ENCODE measurements at regions of chr1 and their contacts with region 1.

Region 1: GRCh38 chr1:168428063-168428731 is 115.6 kb downstream of the XCL2 start:
- DNase-seq: peak; percentile 30
- ATAC-seq: peak; percentile 80
- H3K4me3 Mint-ChIP-seq: peak overlapping the region; percentile 25; the same call in 1 of the 2 replicates
- H3K27ac Mint-ChIP-seq: no peak overlapping the region
- H3K4me1 Mint-ChIP-seq: peaks cover 3% of the 10 kb centered on the region; the same call in 1 of the 2 replicates
- H3K27me3 Mint-ChIP-seq: no peaks in the 10 kb centered on the region; the same call in 1 of the 2 replicates
- CTCF ChIP-seq: no peak

Region 2: DNA sequence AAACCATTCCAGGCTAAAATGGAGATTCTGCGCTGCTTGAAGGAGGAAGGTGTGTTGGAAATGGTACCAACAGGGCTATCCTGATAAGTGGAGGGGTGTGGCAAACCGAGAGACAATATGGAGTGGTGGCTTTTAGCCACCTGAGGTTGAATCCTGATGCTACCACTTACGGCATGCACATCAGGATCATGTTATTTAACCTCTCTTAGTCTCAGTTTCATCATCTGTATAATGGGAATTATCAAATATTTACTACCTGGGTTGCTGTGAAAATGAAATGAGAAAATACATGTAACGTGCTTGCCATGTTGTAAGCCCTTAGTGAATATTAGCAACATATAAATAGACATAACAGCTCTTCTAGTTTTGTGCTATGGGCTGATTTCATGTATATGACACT is 30.4 kb before region 1 on chr1:
- CTCF ChIA-PET with region 1: no interaction called
- POLR2A ChIA-PET with region 1: no interaction called
- DNase-seq: no peak
- ATAC-seq: no peak
- H3K4me3 Mint-ChIP-seq: no peak overlapping the region
- H3K27ac Mint-ChIP-seq: no peak overlapping the region
- H3K4me1 Mint-ChIP-seq: peaks cover 13% of the 10 kb centered on the region
- H3K27me3 Mint-ChIP-seq: no peaks in the 10 kb centered on the region
- CTCF ChIP-seq: no peak

Region 3: DNA sequence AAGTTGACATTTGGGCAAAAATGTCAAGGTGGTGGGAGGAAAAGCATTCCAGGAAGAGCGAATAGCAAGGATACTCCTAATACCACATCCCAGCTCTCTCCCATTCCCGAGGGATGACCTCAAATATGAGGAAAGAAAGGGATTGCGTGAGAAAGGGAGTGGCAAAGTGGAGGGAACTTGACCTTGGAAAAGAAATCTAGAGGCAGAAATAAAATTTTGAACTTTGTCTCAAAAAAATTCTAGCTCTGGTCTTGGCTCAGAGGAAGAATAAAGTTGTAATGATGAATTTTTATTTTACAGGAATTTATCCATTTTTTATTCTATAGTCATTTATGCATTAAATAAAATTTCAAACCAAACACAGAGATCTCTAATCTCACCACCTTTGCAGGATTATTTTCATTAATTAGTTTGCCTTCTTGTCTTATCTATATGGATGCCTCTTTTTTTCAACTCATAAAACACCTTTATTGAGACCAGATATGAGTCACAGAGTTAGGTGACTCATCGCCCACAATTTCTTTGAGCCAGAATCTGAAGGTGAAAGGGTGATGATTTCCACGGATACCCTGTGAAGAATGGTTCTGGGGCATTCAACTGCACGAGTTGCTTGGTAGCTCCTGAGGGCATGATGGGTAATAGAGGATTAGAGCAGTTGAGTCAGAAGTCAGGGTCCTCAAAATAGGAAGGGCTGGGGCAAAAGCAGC is 19.5 kb before region 1 on chr1:
- CTCF ChIA-PET with region 1: no interaction called
- POLR2A ChIA-PET with region 1: no interaction called
- DNase-seq: no peak
- ATAC-seq: no peak
- H3K4me3 Mint-ChIP-seq: no peak overlapping the region
- H3K27ac Mint-ChIP-seq: no peak overlapping the region
- H3K4me1 Mint-ChIP-seq: no peaks in the 10 kb centered on the region
- H3K27me3 Mint-ChIP-seq: no peaks in the 10 kb centered on the region; the same call in 1 of the 2 replicates
- CTCF ChIP-seq: no peak

Region 4: GRCh38 chr1:168439456-168440375 is 11.5 kb after region 1 on chr1:
- CTCF ChIA-PET with region 1: interaction called, 12 read pairs
- POLR2A ChIA-PET with region 1: interaction called, 3 read pairs
- DNase-seq: peak; percentile 85
- ATAC-seq: peak; percentile 98
- H3K4me3 Mint-ChIP-seq: peak overlapping the region; percentile 37; the same call in 1 of the 2 replicates
- H3K27ac Mint-ChIP-seq: no peak overlapping the region
- H3K4me1 Mint-ChIP-seq: peaks cover 10% of the 10 kb centered on the region
- H3K27me3 Mint-ChIP-seq: no peaks in the 10 kb centered on the region
- CTCF ChIP-seq: peak; percentile 77

Region 5: GRCh38 chr1:168520052-168520751 is 92.0 kb after region 1 on chr1:
- CTCF ChIA-PET with region 1: no interaction called
- POLR2A ChIA-PET with region 1: no interaction called
- DNase-seq: peak; percentile 24
- ATAC-seq: peak; percentile 97
- H3K4me3 Mint-ChIP-seq: no peak overlapping the region
- H3K27ac Mint-ChIP-seq: 0 out of 2 replicates have a peak overlapping the region, but pooled peaks have one; percentile 13
- H3K4me1 Mint-ChIP-seq: peaks cover 25% of the 10 kb centered on the region
- H3K27me3 Mint-ChIP-seq: no peaks in the 10 kb centered on the region
- CTCF ChIP-seq: no peak

Measured in WTC11 (cell line).